ENCODE measurements at regions of chr6 and their contacts with region 1.

Region 1: DNA sequence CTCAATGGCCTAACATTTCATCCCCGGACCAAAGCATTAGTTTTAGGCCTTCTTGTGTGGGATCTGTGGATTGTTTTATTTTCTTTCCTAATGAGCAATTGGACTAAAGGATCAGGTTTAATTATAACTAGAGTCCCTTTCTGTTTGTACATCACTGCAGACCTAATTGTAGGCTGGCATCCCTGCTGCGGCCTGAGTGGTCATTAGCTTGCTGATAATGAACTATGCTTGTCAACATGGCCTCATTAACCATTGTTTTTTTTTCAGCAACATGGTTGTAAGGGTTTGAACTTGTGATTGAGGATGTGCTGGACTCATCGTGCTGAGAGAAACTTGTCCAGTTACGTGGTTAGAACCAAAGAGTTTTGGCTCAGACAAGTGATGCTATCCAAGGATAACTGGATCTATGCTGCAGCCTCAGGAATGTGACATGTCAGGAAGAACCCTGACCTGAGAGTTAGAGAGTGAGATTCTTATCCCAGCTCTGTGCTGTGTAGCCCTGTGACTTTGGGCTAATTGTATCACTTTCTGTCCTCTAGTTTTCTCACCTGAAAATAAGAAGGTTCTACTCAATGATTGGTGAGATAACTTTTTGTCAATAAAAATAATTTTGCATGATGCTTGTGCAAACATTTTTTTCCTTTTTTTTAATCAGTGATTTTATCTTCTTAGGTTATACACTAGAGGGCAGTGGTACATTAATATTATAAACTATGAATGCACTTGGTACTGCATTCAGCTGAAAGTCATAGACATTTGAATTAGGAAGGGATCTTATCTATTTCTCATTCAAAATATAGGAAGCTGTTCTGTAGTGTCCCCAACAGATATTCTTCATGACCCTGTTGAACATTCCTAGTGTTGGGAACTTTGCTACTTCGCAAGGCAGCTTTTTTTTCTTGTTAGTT is 140.9 kb downstream of the RNF144B start:
- DNase-seq: peak; percentile 80
- H3K4me3 ChIP-seq: no peak overlapping the region
- H3K27ac ChIP-seq: peak overlapping the region; percentile 82
- H3K4me1 ChIP-seq: peaks cover 44% of the 10 kb centered on the region
- H3K27me3 ChIP-seq: no peaks in the 10 kb centered on the region
- CTCF ChIP-seq: peak; percentile 66

Region 2: GRCh38 chr6:18733921-18734550 is 205.9 kb after region 1 on chr6:
- CTCF ChIA-PET with region 1: no interaction called
- POLR2A ChIA-PET with region 1: no interaction called
- intact Hi-C with region 1: loop called (anchors 1 kb)
- DNase-seq: peak; percentile 97
- H3K4me3 ChIP-seq: no peak overlapping the region
- H3K27ac ChIP-seq: peak overlapping the region; percentile 97
- H3K4me1 ChIP-seq: peaks cover 41% of the 10 kb centered on the region
- H3K27me3 ChIP-seq: no peaks in the 10 kb centered on the region
- CTCF ChIP-seq: no peak

Region 3: DNA sequence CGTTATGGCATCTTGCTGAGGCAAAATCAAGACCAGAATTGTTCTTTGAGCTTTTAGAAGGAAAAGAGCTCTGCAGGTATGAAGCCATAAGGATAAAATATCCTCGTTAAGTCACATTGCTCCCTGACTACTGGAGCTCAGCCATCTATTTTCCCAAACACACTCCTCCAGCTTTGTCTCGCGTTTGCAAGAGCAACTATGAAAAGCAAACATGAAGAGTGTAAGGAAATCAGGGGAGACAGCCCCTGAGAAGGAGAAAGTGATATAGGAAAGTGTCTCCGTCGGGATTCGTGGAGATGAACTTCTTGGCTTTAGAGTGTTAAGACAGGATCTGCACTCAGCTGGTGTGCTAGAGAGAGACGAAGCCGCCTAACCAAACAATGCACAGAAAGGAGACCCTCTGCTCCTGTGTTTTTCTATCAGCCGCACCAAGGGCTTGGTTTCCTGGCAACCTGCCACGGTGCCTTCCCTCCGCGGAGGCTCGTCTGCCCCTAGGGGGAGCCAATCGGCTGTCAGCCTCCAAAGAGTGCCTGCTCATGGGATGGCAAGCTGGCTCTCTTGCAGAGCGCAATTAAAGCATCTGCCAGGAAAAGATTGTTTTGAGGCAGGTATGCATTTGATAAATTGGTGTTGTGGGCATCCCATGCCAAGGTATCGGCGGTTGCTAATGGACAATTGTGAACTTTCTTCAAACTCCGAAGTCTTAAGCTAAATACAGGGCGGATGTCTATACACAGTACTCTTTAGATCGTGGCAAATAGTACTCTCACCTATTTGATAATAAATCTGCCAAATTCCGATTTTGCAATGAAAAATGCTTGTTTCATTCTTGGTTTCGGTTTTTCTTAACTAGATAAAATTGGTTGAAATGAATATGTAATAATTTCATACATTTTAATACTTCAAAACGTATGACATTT is 462.2 kb after region 1 on chr6:
- CTCF ChIA-PET with region 1: no interaction called
- POLR2A ChIA-PET with region 1: no interaction called
- intact Hi-C with region 1: loop called (anchors 10 kb)
- DNase-seq: peak; percentile 90
- H3K4me3 ChIP-seq: no peak overlapping the region
- H3K27ac ChIP-seq: no peak overlapping the region
- H3K4me1 ChIP-seq: peaks cover 6% of the 10 kb centered on the region
- H3K27me3 ChIP-seq: no peaks in the 10 kb centered on the region
- CTCF ChIP-seq: peak; percentile 94

Region 4: DNA sequence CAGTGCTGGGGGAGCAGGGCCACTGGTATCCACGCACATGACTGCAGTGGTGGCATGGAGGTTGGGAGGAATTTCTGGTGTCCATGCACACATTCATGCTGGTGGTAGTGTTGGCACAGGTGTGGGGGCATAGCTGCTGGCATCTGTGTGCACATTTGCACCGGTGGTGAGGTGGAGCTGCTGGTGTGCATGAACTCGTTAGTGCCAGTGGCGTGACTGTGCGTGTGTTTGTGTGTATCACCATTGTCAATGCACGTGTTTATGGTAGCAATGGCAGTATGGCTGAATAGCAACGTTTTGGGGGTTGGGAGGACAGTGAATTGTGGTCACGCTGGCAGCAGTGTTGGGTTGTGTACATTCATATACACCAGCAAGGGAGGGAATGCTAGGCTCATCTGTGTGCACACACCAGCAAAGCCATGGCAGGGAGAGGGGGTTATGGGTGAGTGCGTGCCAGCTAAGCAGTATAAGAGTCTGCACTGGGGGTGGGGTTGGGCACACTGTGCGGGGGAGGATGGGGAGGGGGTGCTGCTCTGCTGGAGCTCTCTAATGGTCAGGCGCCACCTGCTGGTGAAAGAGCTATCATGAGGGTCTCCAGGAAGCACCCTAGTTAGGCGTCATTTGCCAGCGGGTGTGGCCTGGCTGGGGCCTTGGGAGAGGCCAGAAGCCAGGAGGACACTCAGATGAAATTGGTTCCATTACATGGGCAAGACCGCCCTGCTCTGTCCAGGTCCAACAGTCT is 682.9 kb after region 1 on chr6:
- CTCF ChIA-PET with region 1: no interaction called
- POLR2A ChIA-PET with region 1: no interaction called
- intact Hi-C with region 1: loop called (anchors 10 kb)
- DNase-seq: peak; percentile 58
- H3K4me3 ChIP-seq: no peak overlapping the region
- H3K27ac ChIP-seq: no peak overlapping the region
- H3K4me1 ChIP-seq: no peaks in the 10 kb centered on the region
- H3K27me3 ChIP-seq: no peaks in the 10 kb centered on the region
- CTCF ChIP-seq: peak; percentile 71

Region 5: DNA sequence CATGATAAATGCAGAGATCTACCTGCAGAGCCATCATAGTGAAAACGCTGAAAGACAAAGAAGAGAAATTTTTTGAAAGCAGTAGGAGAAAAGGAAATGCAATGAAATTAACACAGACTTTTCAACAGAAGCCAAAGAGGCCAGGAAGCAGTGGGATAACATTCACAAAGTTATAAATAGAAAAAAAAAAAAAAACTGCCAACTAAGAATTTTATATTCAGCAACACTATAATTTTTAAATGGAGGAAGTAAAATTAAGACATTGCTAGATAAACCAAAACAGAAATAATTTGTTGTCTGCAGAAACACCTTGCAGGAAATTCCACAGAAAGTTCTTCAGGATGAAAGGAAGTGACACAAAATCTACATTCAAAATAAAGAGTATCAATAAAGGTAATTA is 717.6 kb after region 1 on chr6:
- CTCF ChIA-PET with region 1: no interaction called
- POLR2A ChIA-PET with region 1: no interaction called
- intact Hi-C with region 1: no loop called
- DNase-seq: no peak
- H3K4me3 ChIP-seq: no peak overlapping the region
- H3K27ac ChIP-seq: no peak overlapping the region
- H3K4me1 ChIP-seq: no peaks in the 10 kb centered on the region
- H3K27me3 ChIP-seq: no peaks in the 10 kb centered on the region
- CTCF ChIP-seq: no peak

Region 6: DNA sequence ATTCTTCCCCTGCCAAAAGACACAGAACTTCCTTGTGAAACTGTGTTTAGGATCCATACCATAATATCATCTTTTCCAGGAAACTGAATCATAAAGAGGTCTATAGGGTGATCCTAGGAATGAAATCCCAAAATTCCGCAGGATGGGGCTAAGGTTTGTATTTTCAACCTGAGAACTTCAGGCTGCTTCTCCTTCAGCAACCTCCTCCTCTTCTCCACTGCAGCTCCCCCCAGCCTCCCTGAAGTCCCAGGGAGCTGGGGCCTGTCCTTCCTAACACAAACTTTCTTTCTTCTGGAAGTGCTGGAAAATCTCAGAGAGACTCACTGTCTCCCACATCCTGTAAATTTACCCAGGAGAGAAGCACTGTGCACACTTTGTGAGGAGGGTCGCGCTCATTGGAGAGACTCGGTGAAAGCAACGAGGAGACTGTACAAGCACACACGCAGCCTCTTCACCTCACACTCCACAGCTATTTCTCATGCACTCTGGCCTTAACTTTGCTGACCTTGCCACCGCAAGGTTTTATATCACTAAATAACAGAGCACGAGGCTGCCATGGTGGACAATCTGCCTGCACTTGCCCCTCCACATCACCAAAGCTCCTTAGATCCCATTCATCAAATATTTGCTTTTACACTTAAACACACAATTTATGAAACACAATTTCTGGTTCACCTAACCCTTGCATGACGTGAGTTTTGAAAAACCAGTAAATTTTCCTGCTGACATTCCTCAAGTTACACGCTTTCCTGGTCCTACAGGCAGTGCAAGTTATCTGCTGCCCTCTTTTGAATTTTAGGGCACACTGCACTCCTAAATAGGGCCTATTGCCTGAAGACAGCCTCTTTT is 1323.4 kb after region 1 on chr6:
- CTCF ChIA-PET with region 1: no interaction called
- POLR2A ChIA-PET with region 1: no interaction called
- intact Hi-C with region 1: loop called (anchors 5 kb)
- DNase-seq: peak; percentile 87
- H3K4me3 ChIP-seq: no peak overlapping the region
- H3K27ac ChIP-seq: peak overlapping the region; percentile 49
- H3K4me1 ChIP-seq: peaks cover 20% of the 10 kb centered on the region
- H3K27me3 ChIP-seq: no peaks in the 10 kb centered on the region
- CTCF ChIP-seq: peak; percentile 94

Region 7: DNA sequence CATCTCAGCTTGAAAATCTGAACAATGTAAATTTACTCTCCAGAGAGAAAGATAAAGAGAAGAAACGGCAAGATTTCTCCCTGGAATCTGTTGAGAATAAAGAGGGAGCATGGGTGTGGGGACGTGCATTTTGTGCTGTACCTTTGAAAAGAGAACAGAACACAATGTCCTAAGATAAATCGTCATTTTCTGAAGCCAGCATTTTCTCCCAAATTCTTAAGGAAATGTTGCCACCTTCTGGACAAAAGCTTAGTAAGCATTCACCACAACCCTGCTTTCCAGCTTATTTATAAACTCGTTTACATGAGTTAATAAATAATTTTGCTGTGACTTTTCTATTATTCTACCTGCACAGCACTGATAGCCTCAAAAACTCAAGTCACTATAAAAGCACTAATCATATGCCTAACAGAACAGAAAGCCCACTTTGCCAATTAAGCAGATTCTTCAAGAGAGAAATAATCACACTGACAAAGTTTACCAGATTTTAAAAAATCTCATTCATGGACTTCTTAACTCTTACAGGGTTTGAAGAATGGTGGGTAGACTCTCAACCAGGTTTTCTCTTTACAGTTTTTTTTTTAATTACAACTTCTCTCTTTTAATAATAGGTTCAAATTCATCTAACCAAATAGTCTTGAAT is 1528.4 kb after region 1 on chr6:
- CTCF ChIA-PET with region 1: interaction called, 4 read pairs
- POLR2A ChIA-PET with region 1: no interaction called
- intact Hi-C with region 1: loop called (anchors 2 kb)
- DNase-seq: peak; percentile 79
- H3K4me3 ChIP-seq: no peak overlapping the region
- H3K27ac ChIP-seq: no peak overlapping the region
- H3K4me1 ChIP-seq: peaks cover 5% of the 10 kb centered on the region
- H3K27me3 ChIP-seq: no peaks in the 10 kb centered on the region
- CTCF ChIP-seq: peak; percentile 78